Stomach (tissue), 19 donors: ENCODE measurements at regions of chr22 and their contacts with region 1.

Region 1: GRCh38 chr22:45870011-45870410 is 107.0 kb downstream of the WNT7B start:
- DNase-seq: peak in 1 of 2 donors; percentile 21
- H3K4me3 ChIP-seq: no peak overlapping the region
- H3K27ac ChIP-seq: no peak overlapping the region
- H3K4me1 ChIP-seq: peaks cover 13 to 21% (median 16%) of the 10 kb centered on the region in 4 donors
- H3K27me3 ChIP-seq: peaks cover 17 to 63% (median 43%) of the 10 kb centered on the region in 3 donors
- CTCF ChIP-seq: no peak
- EP300 ChIP-seq: no peak
- POLR2A ChIP-seq: no peak

Region 2: DNA sequence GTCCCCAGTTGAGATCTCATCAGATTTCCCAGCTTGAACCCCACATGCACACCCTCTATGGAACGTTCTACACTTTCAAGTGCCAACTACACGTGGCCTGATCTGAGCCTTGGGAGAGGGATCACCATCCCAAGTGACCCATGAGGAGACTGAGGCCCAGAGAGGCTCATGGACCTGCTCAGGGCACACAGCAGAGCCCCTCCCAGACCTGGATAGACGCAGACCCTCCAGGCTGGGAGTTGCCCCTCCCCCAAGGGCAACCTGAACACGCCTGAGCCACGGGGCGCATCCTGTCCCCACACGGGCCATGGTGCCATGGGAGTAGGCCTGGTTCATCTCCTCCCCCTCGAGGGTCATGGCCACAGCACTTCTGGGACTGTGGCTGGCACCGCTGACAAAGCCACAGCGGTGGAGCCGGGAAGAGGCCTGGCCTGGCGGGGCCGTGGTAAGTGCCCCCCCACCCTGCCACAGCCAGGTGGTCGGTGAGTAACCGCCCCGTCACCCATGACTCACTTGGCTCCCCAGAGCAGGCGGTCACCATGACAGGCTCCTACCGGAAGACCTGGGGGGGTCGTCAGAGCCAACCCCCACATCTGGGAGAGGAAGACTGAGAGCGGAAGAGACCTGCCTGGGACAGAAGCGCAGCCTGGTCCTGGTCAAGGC is 98.9 kb after region 1 on chr22:
- intact Hi-C with region 1: loop called (anchors 5 kb)
- DNase-seq: no peak
- H3K4me3 ChIP-seq: no peak overlapping the region
- H3K27ac ChIP-seq: no peak overlapping the region
- H3K4me1 ChIP-seq: peaks cover 14 to 22% (median 20%) of the 10 kb centered on the region in 4 donors
- H3K27me3 ChIP-seq: peaks cover 32 to 100% (median 70%) of the 10 kb centered on the region in 3 donors
- CTCF ChIP-seq: no peak
- EP300 ChIP-seq: no peak
- POLR2A ChIP-seq: no peak